Activated CD4-positive, alpha-beta T cell treated with anti-CD3 and anti-CD28 coated beads, Interleukin-2, amount 10 ng/mL, durations not matched to agents 24 days and 14 days (primary cell): ENCODE measurements at regions of chr5 and their contacts with region 1.

Region 1: DNA sequence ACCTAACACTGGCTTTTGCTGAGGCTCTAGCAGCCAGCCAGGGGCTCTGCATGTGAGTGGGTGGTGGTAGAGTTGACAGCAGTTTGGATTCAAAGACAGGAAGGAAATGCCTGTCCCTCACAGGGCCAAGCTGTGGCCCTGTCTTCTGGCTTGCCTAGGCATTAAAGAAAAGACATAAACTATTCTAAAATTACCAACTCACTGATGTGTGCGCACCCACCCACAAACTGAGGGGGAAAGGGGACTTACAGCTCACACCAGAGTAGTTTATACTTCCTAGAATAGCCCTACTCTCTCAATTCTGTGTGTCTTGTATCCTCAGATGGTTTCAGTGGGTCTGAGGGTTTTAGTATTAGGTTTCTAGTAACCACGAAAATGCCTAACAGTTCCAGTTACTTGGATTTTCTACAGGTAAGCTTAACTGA is 18.3 kb upstream of the IL13 start:
- DNase-seq: peak; percentile 77
- H3K4me3 Mint-ChIP-seq: peak overlapping the region; percentile 52
- H3K27ac Mint-ChIP-seq: peak overlapping the region; percentile 86
- H3K4me1 Mint-ChIP-seq: peaks cover 72% of the 10 kb centered on the region
- H3K27me3 Mint-ChIP-seq: no peaks in the 10 kb centered on the region

Region 2: GRCh38 chr5:132103332-132103951 is 536.3 kb before region 1 on chr5:
- intact Hi-C with region 1: loop called (anchors 5 kb)
- DNase-seq: peak; percentile 92
- H3K4me3 Mint-ChIP-seq: peak overlapping the region; percentile 55
- H3K27ac Mint-ChIP-seq: peak overlapping the region; percentile 98
- H3K4me1 Mint-ChIP-seq: peaks cover 72% of the 10 kb centered on the region
- H3K27me3 Mint-ChIP-seq: no peaks in the 10 kb centered on the region

Region 3: DNA sequence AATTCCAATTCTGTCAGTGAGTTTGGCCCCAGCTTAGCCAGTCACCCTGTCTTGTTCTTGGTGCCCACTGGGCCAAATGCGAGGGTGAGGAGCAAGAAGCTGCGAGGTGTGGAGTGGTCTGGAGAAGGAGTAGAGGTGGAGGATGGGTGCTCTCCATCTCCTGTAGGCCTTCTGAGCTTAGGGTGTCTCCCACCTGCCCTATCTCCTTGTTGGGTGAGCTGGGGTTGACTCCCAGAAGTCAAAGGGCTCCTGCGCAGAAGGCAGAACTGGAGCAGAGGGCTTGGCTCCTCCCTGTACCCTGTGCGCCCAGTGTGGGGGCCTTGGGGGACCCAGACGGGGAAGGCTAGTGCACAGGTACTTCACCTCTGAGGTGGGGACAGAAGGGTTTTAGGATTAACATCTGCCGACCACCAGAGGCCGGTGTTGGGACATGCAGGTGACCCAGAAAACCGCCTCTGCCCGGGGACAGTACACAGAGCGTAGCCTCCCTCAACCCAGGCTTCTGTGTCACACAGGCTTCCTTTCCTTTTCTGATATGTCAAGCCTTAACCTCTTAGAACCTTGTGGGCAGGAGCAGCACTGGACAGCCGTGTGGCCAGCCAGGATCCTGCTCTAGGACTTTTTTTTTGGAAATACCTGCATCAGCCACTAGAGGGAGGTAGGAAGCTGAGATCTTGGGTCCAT is 113.3 kb before region 1 on chr5:
- intact Hi-C with region 1: loop called (anchors 1 kb)
- DNase-seq: peak; percentile 90
- H3K4me3 Mint-ChIP-seq: no peak overlapping the region
- H3K27ac Mint-ChIP-seq: peak overlapping the region; percentile 42
- H3K4me1 Mint-ChIP-seq: peaks cover 46% of the 10 kb centered on the region
- H3K27me3 Mint-ChIP-seq: peaks cover under 1% of the 10 kb centered on the region

Region 4: GRCh38 chr5:132655821-132656773 is 16.4 kb after region 1 on chr5:
- intact Hi-C with region 1: loop called (anchors 1 kb)
- DNase-seq: peak; percentile 80
- H3K4me3 Mint-ChIP-seq: peak overlapping the region; percentile 78
- H3K27ac Mint-ChIP-seq: peak overlapping the region; percentile 87
- H3K4me1 Mint-ChIP-seq: peaks cover 48% of the 10 kb centered on the region
- H3K27me3 Mint-ChIP-seq: peaks cover 21% of the 10 kb centered on the region

Region 5: DNA sequence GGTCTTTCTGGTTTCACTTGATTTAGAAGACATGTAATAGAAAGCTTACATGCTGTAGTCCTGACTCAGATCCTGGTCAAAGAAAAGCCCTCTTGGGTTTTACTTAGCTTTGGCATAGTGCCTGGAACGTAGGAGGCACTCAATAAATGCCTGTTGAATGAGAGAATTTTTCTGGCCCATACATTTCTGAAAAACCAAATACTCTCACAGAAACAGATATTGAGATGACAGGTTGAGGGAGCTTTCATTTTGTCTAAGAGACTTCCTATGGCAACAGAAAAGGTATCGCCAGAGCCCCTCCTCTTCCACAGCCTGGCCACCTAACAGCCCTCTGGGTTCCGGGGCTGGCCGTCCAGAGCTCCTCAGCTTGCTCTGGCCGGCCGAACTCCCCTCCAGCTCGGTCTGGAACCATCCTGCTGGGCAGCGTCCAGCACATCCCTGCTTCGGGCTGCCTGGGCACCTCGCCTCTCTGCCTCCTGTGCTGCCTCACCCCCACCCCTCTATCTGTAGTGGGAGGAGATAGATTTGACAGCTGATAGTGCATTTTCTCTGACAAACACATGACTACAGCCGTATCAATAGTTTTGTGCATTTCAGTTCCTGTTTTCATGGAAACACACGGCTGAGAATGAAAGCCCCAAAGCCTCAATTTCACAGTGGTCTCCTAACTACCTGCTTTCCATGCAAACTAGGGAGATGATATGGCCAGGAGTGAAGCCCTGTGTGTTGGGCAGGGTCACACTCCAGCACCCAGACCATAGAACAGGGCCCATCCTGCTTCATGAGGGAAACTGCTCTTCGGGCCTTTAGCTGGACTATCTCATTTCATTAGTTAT is 35.2 kb after region 1 on chr5:
- intact Hi-C with region 1: loop called (anchors 5 kb)
- DNase-seq: no peak
- H3K4me3 Mint-ChIP-seq: peak overlapping the region; percentile 60
- H3K27ac Mint-ChIP-seq: peak overlapping the region; percentile 86
- H3K4me1 Mint-ChIP-seq: peaks cover 33% of the 10 kb centered on the region
- H3K27me3 Mint-ChIP-seq: no peaks in the 10 kb centered on the region

Region 6: DNA sequence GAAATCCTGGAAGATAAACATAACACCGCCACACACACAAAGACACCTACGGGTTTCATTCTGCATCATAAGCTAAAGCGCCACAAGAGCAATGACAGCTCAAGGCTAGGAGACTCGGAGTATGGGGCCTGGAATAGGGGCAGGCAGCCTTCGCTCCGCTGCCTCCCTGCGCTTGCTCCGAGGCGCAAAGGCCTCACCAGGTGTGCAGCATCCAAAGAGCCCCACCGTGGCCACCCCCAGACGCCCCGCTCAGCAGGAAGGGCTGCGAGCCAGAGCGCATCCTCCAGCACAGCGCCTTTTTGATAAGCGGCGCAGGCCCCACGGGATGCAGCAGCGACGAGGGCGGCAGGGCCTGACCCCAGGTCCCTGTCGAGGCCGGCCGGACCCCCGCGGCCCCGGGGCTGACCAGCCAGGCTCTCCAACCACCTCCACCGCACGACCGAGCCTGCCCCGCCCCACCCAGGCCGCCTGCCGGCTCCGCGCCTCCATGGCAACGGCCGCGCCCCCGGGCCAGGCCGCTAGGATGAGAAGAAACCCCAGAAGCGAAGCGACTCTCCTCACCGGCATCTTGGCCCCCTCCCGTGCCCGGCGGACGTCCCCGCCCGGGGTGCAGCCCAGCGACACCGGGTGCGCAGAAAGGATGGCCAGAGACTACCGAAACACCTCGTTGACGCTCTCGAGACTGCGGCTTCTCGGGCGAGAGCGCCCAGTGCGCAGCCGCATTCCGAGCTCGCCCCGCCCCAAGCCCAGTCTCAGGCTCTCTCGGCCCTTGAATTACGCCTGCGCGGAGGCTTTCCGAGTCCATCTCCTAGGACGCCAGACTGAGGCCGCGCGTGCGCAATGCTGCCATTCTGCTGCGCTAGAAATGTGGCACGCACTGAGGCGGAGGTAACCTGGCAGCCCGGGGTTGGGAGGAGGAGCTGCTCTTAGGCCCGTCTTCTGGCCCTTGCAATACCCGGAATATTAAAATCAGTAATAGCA is 97.4 kb after region 1 on chr5 and contains the start of gene KIF3A:
- intact Hi-C with region 1: loop called (anchors 2 kb)
- DNase-seq: peak; percentile 100
- H3K4me3 Mint-ChIP-seq: peak within 1 kb of the TSS; percentile 91
- H3K27ac Mint-ChIP-seq: peak within 1 kb of the TSS; percentile 92
- H3K4me1 Mint-ChIP-seq: peaks cover 40% of the 10 kb centered on the region
- H3K27me3 Mint-ChIP-seq: peaks cover 17% of the 10 kb centered on the region
- total RNA-seq, gene KIF3A: 44.2 and 51.9 TPM in 2 replicates

Region 7: DNA sequence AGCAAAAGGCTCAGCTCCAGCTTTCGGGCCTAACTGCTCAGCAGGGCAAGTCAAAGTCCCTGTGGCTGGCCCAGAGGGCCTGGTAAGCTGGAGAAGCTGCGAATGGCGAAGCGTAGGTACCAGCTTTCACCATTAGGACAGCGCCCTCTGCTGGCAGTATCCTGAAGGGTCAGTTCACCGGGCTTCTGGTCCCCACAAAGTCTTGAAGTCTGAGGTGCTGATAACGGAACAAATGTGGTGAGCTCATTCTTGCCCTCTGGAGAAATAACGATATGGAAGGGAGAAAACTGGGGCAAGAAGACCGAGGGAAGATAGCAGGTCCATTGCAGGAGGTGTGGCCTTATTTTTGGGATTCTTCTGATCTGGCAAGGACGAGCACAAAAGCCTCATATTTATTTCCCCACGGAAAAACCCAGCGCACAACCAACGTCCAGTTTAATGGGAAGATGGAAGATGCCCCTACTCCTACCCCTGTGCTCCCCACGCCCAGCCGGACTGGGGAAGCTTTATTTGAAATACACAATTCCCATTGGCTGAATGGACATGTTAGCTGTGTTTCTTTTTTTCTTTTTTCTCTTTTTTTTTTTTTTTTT is 180.5 kb after region 1 on chr5:
- intact Hi-C with region 1: loop called (anchors 5 kb)
- DNase-seq: peak; percentile 97
- H3K4me3 Mint-ChIP-seq: peak overlapping the region; percentile 37
- H3K27ac Mint-ChIP-seq: no peak overlapping the region
- H3K4me1 Mint-ChIP-seq: peaks cover 15% of the 10 kb centered on the region
- H3K27me3 Mint-ChIP-seq: peaks cover 39% of the 10 kb centered on the region